ENCODE measurements at regions of chr3 and their contacts with region 1.

Region 1: GRCh38 chr3:113136071-113136470 is 75.3 kb upstream of the BOC start:
- DNase-seq: no peak
- ATAC-seq: no peak
- H3K4me3 ChIP-seq: no peak overlapping the region
- H3K27ac ChIP-seq: no peak overlapping the region
- H3K4me1 ChIP-seq: no peaks in the 10 kb centered on the region
- H3K27me3 ChIP-seq: no peaks in the 10 kb centered on the region
- CTCF ChIP-seq: peak; percentile 42
- EP300 ChIP-seq: no peak
- POLR2A ChIP-seq: no peak
- RAD21 ChIP-seq: no peak

Region 2: DNA sequence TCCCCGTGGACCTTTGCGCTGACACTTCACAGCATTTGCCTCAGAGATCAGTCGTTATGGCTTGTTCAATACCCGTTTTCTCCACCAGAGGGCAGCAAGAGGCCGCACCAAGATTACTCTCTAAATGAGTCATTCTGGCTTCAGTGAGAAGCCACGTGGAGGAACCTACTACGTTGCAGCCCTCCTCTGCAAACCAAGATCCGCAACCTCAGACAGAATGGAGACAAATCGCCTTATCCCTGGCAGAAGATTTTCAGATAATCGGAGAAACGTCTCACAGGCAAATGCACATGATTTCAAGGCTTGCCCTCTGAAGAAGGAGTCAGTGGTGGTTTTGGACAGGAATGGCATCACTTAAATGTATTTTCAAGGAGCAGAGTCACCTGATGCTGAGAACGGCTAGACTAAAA is 84.8 kb before region 1 on chr3:
- CTCF ChIA-PET with region 1: no interaction called
- POLR2A ChIA-PET with region 1: no interaction called
- in situ Hi-C with region 1: no loop called
- intact Hi-C with region 1: loop called (anchors 1 kb)
- DNase-seq: peak; percentile 56
- ATAC-seq: peak; percentile 94
- H3K4me3 ChIP-seq: no peak overlapping the region
- H3K27ac ChIP-seq: no peak overlapping the region
- H3K4me1 ChIP-seq: peaks cover 6% of the 10 kb centered on the region; the same call in 1 of the 2 replicates
- H3K27me3 ChIP-seq: no peaks in the 10 kb centered on the region
- CTCF ChIP-seq: peak; percentile 90
- EP300 ChIP-seq: no peak
- POLR2A ChIP-seq: no peak
- RAD21 ChIP-seq: peak; percentile 87

Region 3: GRCh38 chr3:113279686-113280085 is 143.6 kb after region 1 on chr3:
- CTCF ChIA-PET with region 1: no interaction called
- POLR2A ChIA-PET with region 1: no interaction called
- in situ Hi-C with region 1: loop called (anchors 5 kb)
- intact Hi-C with region 1: no loop called
- DNase-seq: no peak
- ATAC-seq: no peak
- H3K4me3 ChIP-seq: no peak overlapping the region
- H3K27ac ChIP-seq: no peak overlapping the region
- H3K4me1 ChIP-seq: peaks cover 25% of the 10 kb centered on the region
- H3K27me3 ChIP-seq: peaks cover 5 to 27% of the 10 kb centered on the region in 2 experiments; a peak in 4 of 5 replicates
- CTCF ChIP-seq: peak; percentile 26; the same call in 1 of the 2 replicates
- EP300 ChIP-seq: no peak
- POLR2A ChIP-seq: no peak
- RAD21 ChIP-seq: no peak

Region 4: DNA sequence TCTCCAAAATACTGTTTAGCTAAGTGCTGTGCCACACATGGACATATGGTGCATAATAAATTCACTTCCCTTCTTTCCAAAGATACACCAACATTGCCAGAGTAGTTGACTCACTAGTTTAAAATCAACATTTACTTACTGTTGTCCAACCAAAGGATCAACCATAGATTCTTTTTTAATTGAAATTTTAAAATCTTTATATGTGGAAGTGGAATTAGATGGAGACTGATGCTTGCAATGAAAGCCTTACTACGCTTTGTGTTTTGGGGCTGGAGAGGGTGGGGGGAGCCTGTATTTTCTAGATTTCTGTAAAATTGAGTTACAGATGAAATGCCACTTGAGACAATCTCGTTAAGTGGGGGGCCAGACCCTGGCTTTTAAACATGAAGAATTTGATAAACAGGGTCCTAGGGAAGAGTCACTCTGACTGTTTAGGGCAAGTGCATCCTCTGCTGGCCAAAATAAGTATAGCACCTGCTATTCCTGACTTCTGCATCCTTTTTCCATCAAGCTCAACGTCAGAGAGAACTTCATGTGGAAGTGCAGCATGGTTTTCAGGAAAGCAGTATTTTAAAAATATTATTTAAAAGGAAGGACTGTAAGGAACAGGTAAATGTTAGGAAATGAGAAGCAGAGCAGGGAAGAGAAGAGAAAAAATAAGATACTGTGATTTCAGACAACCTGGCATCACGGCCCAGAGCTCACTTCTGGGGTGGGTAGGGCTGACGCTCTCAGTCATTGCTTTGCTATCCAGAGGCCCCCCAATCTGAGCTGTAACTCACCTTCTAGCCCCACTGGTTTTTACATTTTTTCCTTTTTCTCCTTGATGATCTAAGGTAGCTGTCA is 152.0 kb after region 1 on chr3:
- CTCF ChIA-PET with region 1: interaction called, 4 read pairs
- POLR2A ChIA-PET with region 1: no interaction called
- in situ Hi-C with region 1: loop called (anchors 5 kb)
- intact Hi-C with region 1: loop called (anchors 1 kb)
- DNase-seq: peak; percentile 43
- ATAC-seq: peak; percentile 56
- H3K4me3 ChIP-seq: no peak overlapping the region
- H3K27ac ChIP-seq: no peak overlapping the region
- H3K4me1 ChIP-seq: peaks cover 18% of the 10 kb centered on the region
- H3K27me3 ChIP-seq: peaks cover 0 to 4% of the 10 kb centered on the region in 2 experiments; a peak in 2 of 5 replicates
- CTCF ChIP-seq: peak; percentile 87
- EP300 ChIP-seq: no peak
- POLR2A ChIP-seq: no peak
- RAD21 ChIP-seq: peak; percentile 80